Calu3 (cell line): ENCODE measurements at regions of chr1 and their contacts with region 1.

Region 1: GRCh38 chr1:157233131-157233530 is 94.9 kb upstream of the ETV3 start:
- DNase-seq: no peak
- H3K4me3 Mint-ChIP-seq: no peak overlapping the region
- H3K27ac Mint-ChIP-seq: no peak overlapping the region
- H3K4me1 Mint-ChIP-seq: peaks cover 43% of the 10 kb centered on the region
- H3K27me3 Mint-ChIP-seq: no peaks in the 10 kb centered on the region
- CTCF ChIP-seq: no peak

Region 2: GRCh38 chr1:157117527-157118057 is 115.5 kb before region 1 on chr1:
- CTCF ChIA-PET with region 1: no interaction called
- intact Hi-C with region 1: no loop called
- DNase-seq: no peak
- H3K4me3 Mint-ChIP-seq: no peak overlapping the region
- H3K27ac Mint-ChIP-seq: no peak overlapping the region
- H3K4me1 Mint-ChIP-seq: no peaks in the 10 kb centered on the region
- H3K27me3 Mint-ChIP-seq: peaks cover 38% of the 10 kb centered on the region
- CTCF ChIP-seq: no peak

Region 3: DNA sequence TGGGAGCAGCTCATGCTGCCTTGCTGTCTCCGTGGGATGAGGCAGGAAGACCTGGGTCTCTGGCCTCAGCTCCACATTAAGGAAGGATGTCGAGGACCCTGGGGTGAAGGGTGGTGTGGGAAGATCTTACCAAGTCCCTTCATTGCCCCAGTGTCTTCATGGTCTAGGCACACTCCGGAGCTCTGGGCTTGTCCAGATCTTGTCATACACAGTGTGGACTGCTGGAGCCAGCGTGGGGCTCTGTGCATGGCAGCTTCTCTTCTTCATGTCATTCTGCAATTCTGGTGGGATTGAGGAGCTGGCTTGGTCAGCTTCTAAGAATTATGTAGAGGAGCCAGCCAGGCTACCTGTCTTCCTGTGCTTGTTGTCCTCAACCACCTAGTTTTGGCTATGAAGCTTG is 15.6 kb before region 1 on chr1:
- CTCF ChIA-PET with region 1: interaction called, 10 read pairs
- intact Hi-C with region 1: no loop called
- DNase-seq: no peak
- H3K4me3 Mint-ChIP-seq: no peak overlapping the region
- H3K27ac Mint-ChIP-seq: no peak overlapping the region
- H3K4me1 Mint-ChIP-seq: no peaks in the 10 kb centered on the region
- H3K27me3 Mint-ChIP-seq: peaks cover 63% of the 10 kb centered on the region
- CTCF ChIP-seq: no peak